Dendritic cell treated with granulocyte-macrophage colony-stimulating factor and Interleukin-4, amounts not matched to agents 40 ng/mL and 50 ng/mL, for 4 days (primary cell): ENCODE measurements at regions of chr7 and their contacts with region 1.

Region 1: DNA sequence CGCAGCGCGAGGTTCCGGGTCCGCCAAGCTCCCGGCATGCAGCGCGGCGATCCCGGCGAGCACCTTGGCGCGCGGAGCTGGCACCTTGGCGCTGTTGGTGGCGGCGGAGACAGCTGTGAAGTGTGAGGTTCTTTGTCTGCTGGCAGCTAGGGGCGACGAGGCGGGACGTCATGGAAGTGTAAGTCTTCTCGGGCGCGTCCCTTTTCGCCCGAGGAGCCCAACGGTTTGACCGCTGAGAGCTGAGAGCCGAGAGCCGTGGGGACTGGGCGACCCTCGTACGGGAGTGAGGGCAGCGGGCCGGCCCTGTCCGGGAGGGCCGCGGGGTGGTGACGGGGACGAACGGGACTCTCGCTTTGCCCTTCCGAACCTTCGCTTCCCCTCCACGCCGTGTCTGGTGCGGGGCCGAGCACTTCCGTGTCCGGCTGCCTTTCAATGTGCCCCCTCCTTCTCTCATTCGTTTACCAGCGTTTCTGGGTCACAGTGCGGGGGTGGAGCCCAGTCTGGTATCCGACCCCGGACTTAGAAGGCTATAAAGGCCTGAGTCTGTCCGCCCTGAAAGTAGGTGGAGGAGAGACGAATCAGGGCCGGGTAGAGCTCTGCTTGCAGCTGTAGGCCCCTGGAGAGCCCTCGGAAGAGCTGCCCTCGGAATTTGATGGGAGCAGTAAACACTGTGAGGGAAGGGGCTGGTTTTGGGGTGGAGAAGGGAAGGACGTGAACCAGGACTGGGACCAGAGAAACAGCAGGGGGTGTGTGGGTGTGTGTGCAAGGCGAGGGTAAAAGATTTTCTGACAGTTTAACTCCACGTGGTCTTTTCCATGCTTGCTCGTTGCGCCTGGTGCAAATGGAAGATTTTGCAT is at the start of gene CRCP:
- H3K4me3 Mint-ChIP-seq: peak within 1 kb of the TSS; percentile 87
- H3K27ac Mint-ChIP-seq: peak within 1 kb of the TSS; percentile 97
- H3K4me1 Mint-ChIP-seq: peaks cover 33% of the 10 kb centered on the region
- H3K27me3 Mint-ChIP-seq: no peaks in the 10 kb centered on the region

Region 2: DNA sequence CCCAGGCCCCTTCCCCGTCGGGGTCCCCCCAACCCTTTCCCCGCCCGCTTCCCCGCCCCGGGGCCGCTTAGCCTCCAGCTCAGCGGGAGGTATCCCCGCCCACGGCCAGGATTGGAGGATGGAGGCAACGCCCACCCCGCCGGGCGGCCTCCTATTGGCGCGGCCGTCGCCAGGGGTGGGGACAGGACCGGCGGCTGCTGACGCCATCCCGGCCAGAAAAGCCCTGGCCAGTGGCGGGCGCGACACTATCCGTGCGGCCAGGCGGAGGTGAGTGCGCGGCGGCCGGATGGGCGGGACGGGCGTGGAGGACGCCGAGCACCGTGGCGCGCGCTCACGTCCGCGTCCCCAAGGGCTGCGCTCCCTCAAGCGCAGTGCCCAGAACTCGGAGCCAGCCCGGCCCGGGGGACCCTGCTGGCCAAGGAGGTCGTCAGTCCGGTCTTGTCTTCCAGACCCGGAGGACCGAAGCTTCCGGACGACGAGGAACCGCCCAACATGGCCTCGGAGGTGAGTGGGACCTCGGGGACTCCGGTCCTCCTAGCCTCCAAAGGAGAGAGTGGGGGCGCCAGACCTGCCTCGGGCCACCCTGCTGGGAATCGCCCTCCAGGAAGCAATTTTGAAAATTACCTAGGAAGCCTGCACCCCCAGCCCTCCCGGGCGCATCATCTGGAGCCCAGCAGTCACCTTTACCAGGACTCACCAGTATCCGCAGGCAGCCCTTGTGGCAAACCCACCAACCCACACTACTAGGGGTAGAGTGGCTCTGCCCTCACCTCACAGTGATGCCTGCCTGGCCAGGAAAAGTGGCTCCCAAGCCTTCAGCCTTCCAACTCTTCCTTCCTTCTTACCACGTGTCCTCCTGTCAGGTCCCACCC is 39.2 kb before region 1 on chr7 and contains the start of gene ASL:
- intact Hi-C with region 1: loop called (anchors 5 kb)
- H3K4me3 Mint-ChIP-seq: peak within 1 kb of the TSS; percentile 78
- H3K27ac Mint-ChIP-seq: peak within 1 kb of the TSS; percentile 62
- H3K4me1 Mint-ChIP-seq: peaks cover 16% of the 10 kb centered on the region
- H3K27me3 Mint-ChIP-seq: peaks cover 2% of the 10 kb centered on the region

Region 3: DNA sequence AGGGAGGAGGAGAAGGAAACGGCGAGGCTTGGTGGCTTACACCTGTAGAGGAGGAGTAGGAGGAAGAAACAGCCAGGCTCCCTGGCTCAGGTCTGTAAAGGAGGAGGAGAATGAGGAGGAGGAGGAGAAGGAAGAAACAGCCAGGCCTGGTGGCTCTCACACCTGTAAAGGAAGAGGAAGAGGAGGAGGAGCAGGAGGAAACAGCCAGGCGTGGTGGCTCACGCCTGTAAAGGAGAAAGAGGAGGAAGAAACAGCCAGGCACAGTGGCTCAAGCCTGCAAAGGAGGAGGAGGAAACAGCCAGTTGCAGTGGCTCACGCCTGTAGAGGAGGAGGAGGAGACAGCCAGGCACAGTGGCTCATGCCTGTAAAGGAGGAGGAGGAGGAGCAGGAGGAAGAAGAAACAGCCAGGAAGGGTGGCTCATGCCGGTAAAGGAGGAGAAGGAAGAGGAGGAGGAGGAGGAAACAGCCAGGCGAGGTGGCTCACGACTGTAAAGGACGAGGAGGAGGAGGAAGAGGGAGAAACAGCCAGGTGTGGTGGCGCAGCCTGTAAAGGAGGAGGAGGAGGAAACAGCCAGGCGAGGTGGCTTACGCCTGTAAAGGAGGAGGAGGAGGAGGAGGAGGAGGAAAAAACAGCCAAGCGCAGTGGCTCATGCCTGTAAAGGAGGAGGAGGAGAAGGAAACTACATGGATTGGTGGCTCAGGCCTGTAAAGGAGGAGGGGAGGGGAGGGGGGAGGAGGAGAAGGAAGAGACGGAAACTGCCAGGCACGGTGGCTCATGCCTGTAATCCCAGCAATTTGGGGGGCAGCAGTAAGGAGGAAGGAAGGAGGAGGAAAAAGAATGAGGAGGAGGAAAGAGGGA is 15.2 kb before region 1 on chr7:
- intact Hi-C with region 1: no loop called
- H3K4me3 Mint-ChIP-seq: peak overlapping the region; percentile 66
- H3K27ac Mint-ChIP-seq: peak overlapping the region; percentile 35
- H3K4me1 Mint-ChIP-seq: peaks cover 13% of the 10 kb centered on the region
- H3K27me3 Mint-ChIP-seq: no peaks in the 10 kb centered on the region

Region 4: GRCh38 chr7:66170309-66171231 is 55.5 kb after region 1 on chr7:
- intact Hi-C with region 1: no loop called
- H3K4me3 Mint-ChIP-seq: no peak overlapping the region
- H3K27ac Mint-ChIP-seq: no peak overlapping the region
- H3K4me1 Mint-ChIP-seq: no peaks in the 10 kb centered on the region
- H3K27me3 Mint-ChIP-seq: no peaks in the 10 kb centered on the region

Region 5: DNA sequence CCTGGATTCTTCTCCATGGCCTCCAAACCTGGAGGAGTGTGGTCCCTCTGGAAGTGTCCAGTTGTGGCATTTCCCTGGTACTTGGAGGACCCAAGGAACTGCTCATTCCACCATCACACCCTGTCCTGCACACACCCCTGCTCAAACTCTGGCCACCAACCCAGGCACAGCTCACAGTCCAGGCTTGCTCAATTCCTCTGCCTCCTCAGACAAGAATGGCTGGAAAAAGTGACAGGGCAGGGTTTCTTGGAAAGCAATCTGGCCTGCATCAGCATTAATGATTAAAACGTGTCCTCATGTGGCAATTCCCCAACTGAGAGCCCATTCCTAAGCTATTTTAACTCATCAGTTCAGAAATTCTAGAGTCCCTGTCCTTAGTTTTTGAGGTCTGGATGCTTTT is 72.9 kb after region 1 on chr7:
- intact Hi-C with region 1: no loop called
- H3K4me3 Mint-ChIP-seq: no peak overlapping the region
- H3K27ac Mint-ChIP-seq: no peak overlapping the region
- H3K4me1 Mint-ChIP-seq: no peaks in the 10 kb centered on the region
- H3K27me3 Mint-ChIP-seq: peaks cover 4% of the 10 kb centered on the region

Region 6: GRCh38 chr7:66493235-66494181 is 378.5 kb after region 1 on chr7:
- intact Hi-C with region 1: loop called (anchors 2 kb)
- H3K4me3 Mint-ChIP-seq: peak overlapping the region; percentile 84
- H3K27ac Mint-ChIP-seq: peak overlapping the region; percentile 98
- H3K4me1 Mint-ChIP-seq: peaks cover 25% of the 10 kb centered on the region
- H3K27me3 Mint-ChIP-seq: peaks cover 1% of the 10 kb centered on the region